ENCODE measurements at regions of chr1 and their contacts with region 1.

Region 1: GRCh38 chr1:2586154-2587070 is at the start of gene PRXL2B:
- DNase-seq: peak; percentile 97 to 98
- ATAC-seq: peak; percentile 75 to 90 (median 81)
- H3K4me3 ChIP-seq: peak within 1 kb of the TSS; percentile 84
- H3K4me3 Mint-ChIP-seq: peak within 1 kb of the TSS; percentile 92
- H3K27ac ChIP-seq: peak within 1 kb of the TSS; percentile 100
- H3K27ac Mint-ChIP-seq: peak within 1 kb of the TSS; percentile 95
- H3K4me1 ChIP-seq: peaks cover 36% of the 10 kb centered on the region
- H3K4me1 Mint-ChIP-seq: peaks cover 6 to 28% of the 10 kb centered on the region in 2 donors
- H3K27me3 ChIP-seq: no peaks in the 10 kb centered on the region
- H3K27me3 Mint-ChIP-seq: no peaks in the 10 kb centered on the region
- CTCF ChIP-seq: no peak
- total RNA-seq, gene PRXL2B: 11.3 to 15.1 (median 11.6) TPM

Region 2: DNA sequence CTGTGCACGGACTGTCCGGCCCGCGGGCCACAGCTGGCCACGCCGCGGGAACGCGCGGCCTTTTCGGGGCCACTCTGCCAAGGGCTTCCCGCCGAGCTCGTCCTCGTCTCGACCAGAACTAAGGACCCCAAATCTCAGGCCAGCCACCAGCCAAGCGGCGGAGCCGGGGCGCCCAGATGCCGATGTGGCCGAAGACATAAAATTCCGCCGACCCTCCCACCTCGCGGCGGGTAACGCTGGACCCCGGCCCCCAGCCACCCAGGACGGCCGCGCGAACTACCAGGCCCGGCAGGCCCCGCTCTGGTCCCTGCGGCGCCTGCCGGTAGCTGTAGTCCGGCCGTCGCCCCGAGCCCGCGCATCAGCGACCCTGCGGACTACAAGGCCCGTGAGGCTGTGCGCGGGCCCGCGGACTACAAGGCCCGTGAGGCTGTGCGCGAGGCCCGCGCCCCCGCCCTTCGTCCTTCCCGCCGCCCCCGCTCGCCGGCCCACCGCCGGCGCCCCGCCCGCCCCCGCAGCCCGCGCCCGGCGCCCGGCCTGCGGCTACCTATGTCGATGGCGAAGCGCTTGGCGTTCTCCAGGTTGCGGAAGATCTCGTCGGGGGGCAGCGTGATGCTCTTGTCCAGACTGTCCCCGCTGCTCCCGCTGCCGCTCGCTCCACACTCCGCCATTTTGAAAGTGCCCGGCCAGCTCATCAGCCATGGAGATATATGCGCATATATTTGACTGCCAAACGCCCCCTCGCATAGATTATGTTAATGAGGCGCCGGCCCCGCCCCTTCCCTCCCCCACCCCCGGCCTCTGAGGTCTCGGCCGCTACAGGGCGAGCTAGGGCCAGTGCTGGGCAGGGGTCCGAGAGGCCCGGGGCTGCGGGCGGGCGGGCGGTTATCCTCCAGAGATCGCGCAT is 60.2 kb before region 1 on chr1 and contains the start of gene PANK4:
- intact Hi-C with region 1: loop called (anchors 5 kb)
- DNase-seq: peak; percentile 88 to 95
- ATAC-seq: peak; percentile 91 to 98 (median 93)
- H3K4me3 ChIP-seq: peak within 1 kb of the TSS; percentile 72
- H3K4me3 Mint-ChIP-seq: peak within 1 kb of the TSS; percentile 97
- H3K27ac ChIP-seq: peak within 1 kb of the TSS; percentile 62
- H3K27ac Mint-ChIP-seq: peak within 1 kb of the TSS; percentile 89 to 93
- H3K4me1 ChIP-seq: peaks cover 69% of the 10 kb centered on the region
- H3K4me1 Mint-ChIP-seq: peaks cover 24 to 43% of the 10 kb centered on the region in 2 donors
- H3K27me3 ChIP-seq: peaks cover 21% of the 10 kb centered on the region
- H3K27me3 Mint-ChIP-seq: peaks cover 0 to 9% of the 10 kb centered on the region in 2 donors
- CTCF ChIP-seq: no peak
- total RNA-seq, gene PANK4: 48.2 to 75.7 (median 61.8) TPM

Region 3: GRCh38 chr1:2545759-2546514 is 40.5 kb before region 1 on chr1:
- intact Hi-C with region 1: loop called (anchors 1 kb)
- DNase-seq: peak; percentile 85 to 95
- ATAC-seq: peak; percentile 52 to 75 (median 65)
- H3K4me3 ChIP-seq: peak overlapping the region; percentile 93
- H3K4me3 Mint-ChIP-seq: peak overlapping the region; percentile 94
- H3K27ac ChIP-seq: peak overlapping the region; percentile 97
- H3K27ac Mint-ChIP-seq: peak overlapping the region; percentile 94 to 97
- H3K4me1 ChIP-seq: peaks cover 68% of the 10 kb centered on the region
- H3K4me1 Mint-ChIP-seq: peaks cover 0 to 31% of the 10 kb centered on the region in 2 donors
- H3K27me3 ChIP-seq: no peaks in the 10 kb centered on the region
- H3K27me3 Mint-ChIP-seq: no peaks in the 10 kb centered on the region
- CTCF ChIP-seq: no peak

Region 4: DNA sequence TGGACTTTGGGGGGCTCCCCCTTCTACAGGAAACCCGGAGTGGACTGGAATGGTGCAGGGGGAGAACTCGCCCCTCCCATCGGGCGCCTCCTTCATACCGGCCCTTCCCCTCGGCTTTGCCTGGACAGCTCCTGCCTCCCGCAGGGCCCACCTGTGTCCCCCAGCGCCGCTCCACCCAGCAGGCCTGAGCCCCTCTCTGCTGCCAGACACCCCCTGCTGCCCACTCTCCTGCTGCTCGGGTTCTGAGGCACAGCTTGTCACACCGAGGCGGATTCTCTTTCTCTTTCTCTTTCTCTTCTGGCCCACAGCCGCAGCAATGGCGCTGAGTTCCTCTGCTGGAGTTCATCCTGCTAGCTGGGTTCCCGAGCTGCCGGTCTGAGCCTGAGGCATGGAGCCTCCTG is 30.1 kb before region 1 on chr1 and contains the start of gene TNFRSF14:
- intact Hi-C with region 1: loop called (anchors 2 kb)
- DNase-seq: peak; percentile 71 to 91
- ATAC-seq: peak; percentile 74 to 82 (median 77)
- H3K4me3 ChIP-seq: peak within 1 kb of the TSS; percentile 80
- H3K4me3 Mint-ChIP-seq: peak within 1 kb of the TSS; percentile 94
- H3K27ac ChIP-seq: peak within 1 kb of the TSS; percentile 97
- H3K27ac Mint-ChIP-seq: peak within 1 kb of the TSS; percentile 96 to 99
- H3K4me1 ChIP-seq: peaks cover 46% of the 10 kb centered on the region
- H3K4me1 Mint-ChIP-seq: peaks cover 19 to 55% of the 10 kb centered on the region in 2 donors
- H3K27me3 ChIP-seq: no peaks in the 10 kb centered on the region
- H3K27me3 Mint-ChIP-seq: no peaks in the 10 kb centered on the region
- CTCF ChIP-seq: peak; percentile 35
- total RNA-seq, gene TNFRSF14: 228 to 266 (median 262) TPM

Region 5: DNA sequence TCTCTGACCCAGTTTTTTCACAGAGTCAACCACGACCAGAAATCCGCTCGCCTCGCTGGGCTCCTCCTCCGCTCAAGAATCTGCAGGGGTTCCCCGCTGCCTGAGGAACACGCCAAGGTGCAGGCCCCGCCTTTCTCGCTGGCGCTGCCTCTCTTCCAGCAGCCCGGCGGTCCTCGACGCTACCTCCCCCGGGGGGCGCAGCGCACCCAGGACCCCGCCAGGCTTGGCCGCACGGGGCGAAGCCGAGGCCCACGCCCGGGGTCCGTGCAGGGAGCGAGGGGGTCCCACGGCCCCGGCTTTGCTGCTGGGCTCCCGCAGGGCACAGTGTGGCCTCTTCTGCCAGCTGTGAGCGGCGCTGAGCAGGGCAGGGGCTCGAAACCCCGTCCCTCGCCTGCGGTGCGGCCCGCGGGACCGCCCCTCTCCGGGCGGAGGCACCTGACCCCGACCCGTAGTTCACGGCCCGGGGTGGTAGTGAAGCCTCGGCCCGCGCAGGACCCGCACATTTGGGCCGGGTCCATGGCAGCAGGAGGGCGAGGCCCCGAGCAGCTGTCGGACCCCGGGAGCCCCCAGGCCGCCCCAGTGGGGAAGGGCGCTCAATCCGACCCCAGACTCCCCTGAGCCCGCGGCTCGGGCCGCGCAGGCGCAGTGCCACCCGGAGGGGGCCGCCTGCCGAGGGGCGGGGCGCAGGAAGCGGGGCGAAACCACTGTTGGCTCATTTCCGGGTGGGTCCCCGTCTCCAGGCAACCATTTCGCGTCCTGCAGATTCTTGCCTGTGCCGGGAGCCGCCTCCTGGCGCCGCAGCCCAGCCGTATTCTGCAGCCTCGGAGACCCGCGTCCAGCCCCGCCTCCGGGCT is 56.4 kb after region 1 on chr1:
- intact Hi-C with region 1: loop called (anchors 1 kb)
- DNase-seq: peak; percentile 95 to 97
- ATAC-seq: peak; percentile 85 to 87 (median 86)
- H3K4me3 ChIP-seq: peak overlapping the region; percentile 70
- H3K4me3 Mint-ChIP-seq: peak overlapping the region; percentile 86
- H3K27ac ChIP-seq: peak overlapping the region; percentile 96
- H3K27ac Mint-ChIP-seq: peak overlapping the region; percentile 80 to 97
- H3K4me1 ChIP-seq: peaks cover 22% of the 10 kb centered on the region
- H3K4me1 Mint-ChIP-seq: peaks cover 10 to 18% of the 10 kb centered on the region in 2 donors
- H3K27me3 ChIP-seq: no peaks in the 10 kb centered on the region
- H3K27me3 Mint-ChIP-seq: peaks cover 0 to under 1% of the 10 kb centered on the region in 2 donors
- CTCF ChIP-seq: no peak

Measured in natural killer cell (primary cell).